Activated CD4-positive, alpha-beta memory T cell treated with anti-CD3 and anti-CD28 coated beads, Interleukin-2, amount 10 ng/mL, durations not matched to agents 7 days and 5 days (primary cell): ENCODE measurements at regions of chr4 and their contacts with region 1.

Region 1: GRCh38 chr4:48578132-48578968 is 88.3 kb downstream of the ZAR1 start:
- DNase-seq: peak; percentile 41
- H3K4me3 Mint-ChIP-seq: no peak overlapping the region
- H3K27ac Mint-ChIP-seq: no peak overlapping the region
- H3K4me1 Mint-ChIP-seq: no peaks in the 10 kb centered on the region
- H3K27me3 Mint-ChIP-seq: no peaks in the 10 kb centered on the region

Region 2: GRCh38 chr4:48642421-48643374 is 64.3 kb after region 1 on chr4:
- CTCF ChIA-PET with region 1: no interaction called
- POLR2A ChIA-PET with region 1: no interaction called
- DNase-seq: no peak
- H3K4me3 Mint-ChIP-seq: no peak overlapping the region
- H3K27ac Mint-ChIP-seq: no peak overlapping the region
- H3K4me1 Mint-ChIP-seq: no peaks in the 10 kb centered on the region
- H3K27me3 Mint-ChIP-seq: no peaks in the 10 kb centered on the region

Region 3: DNA sequence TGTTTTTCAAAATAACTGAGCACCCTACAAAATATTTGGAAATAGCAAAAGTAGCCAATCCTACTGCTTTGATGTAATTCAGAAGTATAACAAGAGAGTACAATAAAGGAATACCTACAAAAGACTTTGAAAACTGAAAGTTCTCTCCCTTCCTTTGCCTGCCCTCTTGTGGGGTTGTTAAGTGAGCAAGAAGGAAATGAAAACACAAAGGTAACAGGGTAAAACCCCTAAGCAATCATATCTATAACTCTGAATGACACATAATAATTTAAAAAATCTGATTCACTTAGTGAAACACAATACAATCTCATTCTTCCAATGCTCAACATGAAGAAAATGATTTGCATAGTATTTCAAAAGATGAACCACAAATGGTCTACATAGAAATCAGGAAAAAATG is 103.5 kb after region 1 on chr4:
- CTCF ChIA-PET with region 1: interaction called, 21 read pairs
- POLR2A ChIA-PET with region 1: no interaction called
- DNase-seq: no peak
- H3K4me3 Mint-ChIP-seq: no peak overlapping the region
- H3K27ac Mint-ChIP-seq: no peak overlapping the region
- H3K4me1 Mint-ChIP-seq: peaks cover 32% of the 10 kb centered on the region
- H3K27me3 Mint-ChIP-seq: no peaks in the 10 kb centered on the region